Adrenal gland (tissue), 19 donors: ENCODE measurements at regions of chr14 and their contacts with region 1.

Region 1: DNA sequence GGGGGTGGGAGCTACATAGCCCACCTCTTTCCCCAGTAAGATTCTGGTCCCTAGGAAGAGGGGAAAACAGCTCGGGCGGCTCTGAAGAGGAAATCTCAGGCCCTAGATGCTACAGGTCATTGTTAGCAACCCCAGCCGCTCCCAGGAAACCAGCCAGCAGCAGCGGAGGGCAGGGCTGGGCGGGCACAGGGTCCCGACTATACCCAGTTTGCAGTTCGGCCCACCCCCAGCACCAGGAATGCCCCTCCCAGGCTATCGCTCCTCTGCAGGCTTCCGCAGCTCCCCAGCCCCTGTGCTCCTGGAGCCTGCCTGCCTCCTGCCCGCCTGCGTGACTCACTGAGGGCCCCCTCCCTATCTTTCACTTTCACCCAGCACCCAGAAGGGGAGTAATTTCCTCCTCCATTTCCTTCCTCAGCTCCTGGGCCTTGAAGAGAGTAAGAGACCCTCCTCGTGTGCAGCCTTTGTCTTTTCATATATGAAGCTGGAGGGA is 27.2 kb upstream of the PNMA1 start:
- DNase-seq: peak in 6 of 7 donors; percentile 73 to 87 (median 76)
- H3K4me3 ChIP-seq: peak overlapping the region in 1 of 4 donors; percentile 46
- H3K27ac ChIP-seq: peak overlapping the region; percentile 39 to 90 (median 71)
- H3K4me1 ChIP-seq: peaks cover 61 to 71% of the 10 kb centered on the region in 2 donors
- H3K27me3 ChIP-seq: no peaks in the 10 kb centered on the region
- CTCF ChIP-seq: peak in 1 of 6 experiments; percentile 13
- POLR2A ChIP-seq: no peak

Region 2: GRCh38 chr14:73802431-73803188 is 61.2 kb after region 1 on chr14:
- intact Hi-C with region 1: loop called in 1 of 2 experiments (anchors 10 kb)
- DNase-seq: peak in 1 of 7 donors; percentile 36
- H3K4me3 ChIP-seq: no peak overlapping the region
- H3K27ac ChIP-seq: peak overlapping the region in 1 of 5 donors; percentile 55
- H3K4me1 ChIP-seq: no peaks in the 10 kb centered on the region
- H3K27me3 ChIP-seq: no peaks in the 10 kb centered on the region
- CTCF ChIP-seq: no peak
- POLR2A ChIP-seq: no peak

Region 3: DNA sequence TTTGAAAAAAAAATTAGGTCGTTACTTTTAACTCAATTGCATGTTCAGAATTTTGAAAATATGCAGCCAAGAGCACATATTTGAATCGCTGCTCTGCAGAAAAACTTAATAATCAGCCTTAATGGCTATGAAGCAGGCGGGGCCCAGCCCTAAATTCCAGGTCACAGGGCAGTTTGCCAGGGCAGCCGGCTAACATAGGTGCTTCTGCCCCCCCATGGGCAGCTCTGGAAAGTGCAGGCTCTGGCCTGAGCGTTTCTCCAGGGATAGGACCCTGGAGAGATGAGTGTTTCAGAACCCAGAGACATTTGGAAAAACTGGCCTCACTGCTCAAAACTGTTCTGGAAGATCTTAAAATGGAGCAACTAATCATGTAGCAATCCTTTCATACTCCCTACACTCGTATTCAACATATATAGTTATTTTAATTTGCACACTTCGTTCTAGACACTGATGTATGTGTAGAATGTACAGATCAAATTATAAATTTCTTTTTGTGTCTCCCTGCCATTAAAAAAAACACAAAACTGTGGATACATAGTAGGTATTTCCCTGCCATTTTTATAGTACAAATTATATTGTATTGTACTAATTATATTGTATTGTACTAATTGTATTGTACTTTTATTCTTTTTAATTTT is 84.2 kb after region 1 on chr14:
- intact Hi-C with region 1: loop called in 1 of 2 experiments (anchors 5 kb)
- DNase-seq: peak; percentile 90 to 97 (median 96)
- H3K4me3 ChIP-seq: no peak overlapping the region
- H3K27ac ChIP-seq: no peak overlapping the region
- H3K4me1 ChIP-seq: peaks cover 3 to 18% of the 10 kb centered on the region in 2 donors
- H3K27me3 ChIP-seq: no peaks in the 10 kb centered on the region
- CTCF ChIP-seq: peak; percentile 68 to 92 (median 88)
- POLR2A ChIP-seq: no peak